ENCODE measurements at regions of chr12 and their contacts with region 1.

Region 1: GRCh38 chr12:14995583-14996425 is 23.0 kb downstream of the PDE6H start:
- DNase-seq: no peak
- CTCF ChIP-seq: peak; percentile 44

Region 2: DNA sequence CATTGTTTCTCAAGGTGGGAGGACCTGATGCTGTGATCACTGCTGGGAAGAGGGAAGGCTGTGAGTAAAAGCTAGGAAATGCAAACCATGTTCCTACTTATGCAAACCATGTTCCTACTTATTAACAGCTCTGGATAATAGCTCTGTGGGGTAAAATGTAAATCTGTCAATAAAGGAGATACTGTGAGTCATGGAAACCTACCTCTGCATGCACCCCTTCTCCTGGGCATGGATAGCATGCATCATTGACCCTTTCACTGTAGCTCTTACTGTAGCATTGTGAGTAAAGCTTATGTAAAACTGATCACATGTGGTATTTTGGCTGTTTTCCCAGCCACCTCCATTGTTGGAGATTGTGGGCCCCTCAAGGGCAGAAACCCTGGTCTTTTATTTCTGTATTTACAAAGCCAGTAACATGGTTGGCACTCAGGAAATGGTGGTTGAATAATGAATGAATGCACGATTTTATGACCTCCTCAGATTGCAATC is 1268.1 kb before region 1 on chr12:
- CTCF ChIA-PET with region 1: no interaction called
- POLR2A ChIA-PET with region 1: no interaction called
- DNase-seq: no peak
- CTCF ChIP-seq: no peak

Region 3: GRCh38 chr12:14769969-14770495 is 225.8 kb before region 1 on chr12:
- CTCF ChIA-PET with region 1: interaction called, 13 read pairs
- POLR2A ChIA-PET with region 1: interaction called, 6 read pairs
- DNase-seq: peak; percentile 74
- CTCF ChIP-seq: peak; percentile 88

Region 4: GRCh38 chr12:14845350-14845750 is 150.5 kb before region 1 on chr12:
- CTCF ChIA-PET with region 1: interaction called, 85 read pairs
- POLR2A ChIA-PET with region 1: no interaction called
- DNase-seq: peak; percentile 64
- CTCF ChIP-seq: peak; percentile 71

Region 5: GRCh38 chr12:14982562-14982961 is 13.2 kb before region 1 on chr12:
- CTCF ChIA-PET with region 1: interaction called, 17 read pairs
- POLR2A ChIA-PET with region 1: no interaction called
- DNase-seq: no peak
- CTCF ChIP-seq: no peak

Region 6: DNA sequence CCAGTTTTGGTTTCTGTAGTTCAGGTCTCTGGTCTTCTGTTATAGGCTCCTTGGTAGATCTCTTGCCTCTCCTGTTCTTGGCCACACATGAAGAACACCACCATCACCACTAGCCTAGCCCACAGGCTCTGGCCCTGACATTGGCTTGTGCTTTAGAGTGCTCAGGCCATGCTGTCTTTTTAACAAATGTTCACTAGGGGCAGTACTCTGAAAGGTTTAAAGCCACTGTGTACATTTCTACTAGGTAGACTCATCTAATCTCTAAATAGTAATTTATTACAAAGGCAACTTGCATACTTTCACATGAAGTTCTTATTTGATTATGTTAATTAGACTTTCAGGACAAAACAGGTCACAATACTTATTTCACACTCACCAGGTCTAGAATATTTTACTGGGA is 15.4 kb after region 1 on chr12:
- CTCF ChIA-PET with region 1: interaction called, 11 read pairs
- POLR2A ChIA-PET with region 1: no interaction called
- DNase-seq: no peak
- CTCF ChIP-seq: peak; percentile 10